GM10248 (cell line): ENCODE measurements at regions of chr7 and their contacts with region 1.

Region 1: DNA sequence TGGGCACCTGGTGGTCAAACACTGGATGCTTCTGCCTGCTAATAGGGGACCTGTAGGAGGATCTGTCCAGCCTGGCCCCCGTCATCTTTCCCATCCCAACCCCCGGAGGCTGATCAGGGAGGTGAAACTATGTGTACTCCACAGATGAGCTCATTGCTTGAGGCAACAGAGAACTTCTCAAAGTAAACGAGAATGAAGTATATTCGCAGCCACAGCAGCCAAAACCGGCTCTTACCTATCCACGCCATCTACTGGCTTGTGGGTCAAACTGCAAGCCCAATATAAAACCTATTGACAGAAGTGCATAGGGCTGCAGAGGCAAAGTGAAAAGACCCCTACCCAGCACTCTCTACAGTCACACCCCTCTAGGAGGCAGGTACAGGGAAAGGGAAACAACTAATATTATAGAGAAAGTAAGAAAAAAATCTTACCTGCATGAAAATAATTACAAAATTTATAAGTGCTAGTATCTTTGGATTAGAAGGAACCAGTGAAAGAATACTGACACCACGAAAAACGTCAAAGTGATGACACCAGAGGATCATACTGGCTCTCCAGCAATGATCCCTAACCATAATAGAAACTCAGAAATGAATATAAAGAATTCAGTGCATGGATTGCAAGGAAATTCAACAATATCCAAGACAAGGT is 973.5 kb downstream of the ANKRD7 start:
- DNase-seq: peak; percentile 24
- CTCF ChIP-seq: peak; percentile 78

Region 2: GRCh38 chr7:119007236-119007635 is 190.8 kb before region 1 on chr7:
- CTCF ChIA-PET with region 1: no interaction called
- POLR2A ChIA-PET with region 1: no interaction called
- DNase-seq: no peak
- CTCF ChIP-seq: no peak

Region 3: GRCh38 chr7:119175911-119176627 is 21.9 kb before region 1 on chr7:
- CTCF ChIA-PET with region 1: interaction called, 12 read pairs
- POLR2A ChIA-PET with region 1: no interaction called
- DNase-seq: peak; percentile 15
- CTCF ChIP-seq: peak; percentile 70

Region 4: GRCh38 chr7:119184124-119184788 is 13.7 kb before region 1 on chr7:
- CTCF ChIA-PET with region 1: interaction called, 19 read pairs
- POLR2A ChIA-PET with region 1: no interaction called
- DNase-seq: no peak
- CTCF ChIP-seq: no peak

Region 5: DNA sequence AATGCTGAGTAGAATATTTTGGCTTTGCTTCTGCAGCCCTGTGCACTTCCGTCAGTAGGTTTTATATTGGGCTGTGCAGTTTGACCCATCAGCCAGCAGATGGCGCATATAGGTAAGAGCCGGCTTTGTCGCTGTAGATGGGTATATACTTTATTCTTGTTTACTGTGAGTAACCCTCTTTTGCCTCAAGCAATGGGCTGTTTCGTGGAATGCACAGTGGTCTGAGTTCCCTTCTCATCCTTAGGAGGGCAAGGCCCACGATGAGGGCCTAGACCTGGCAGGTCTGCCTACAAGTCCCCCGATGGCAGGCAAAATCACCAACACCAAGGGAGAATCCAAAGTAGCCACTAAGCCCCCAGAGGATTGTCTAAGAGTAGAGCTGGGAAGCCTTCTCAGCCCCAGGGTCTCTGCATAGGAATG is 72.1 kb after region 1 on chr7:
- CTCF ChIA-PET with region 1: no interaction called
- POLR2A ChIA-PET with region 1: no interaction called
- DNase-seq: peak; percentile 33
- CTCF ChIP-seq: peak; percentile 95